Vagina (tissue), 2 donors: ENCODE measurements at regions of chrX and their contacts with region 1.

Region 1: GRCh38 chrX:124328765-124329164 is 3.7 kb upstream of the TEX13D start:
- DNase-seq: no peak
- H3K4me3 ChIP-seq: no peak overlapping the region
- H3K27ac ChIP-seq: no peak overlapping the region
- H3K4me1 ChIP-seq: no peaks in the 10 kb centered on the region
- H3K27me3 ChIP-seq: no peaks in the 10 kb centered on the region
- CTCF ChIP-seq: no peak
- POLR2A ChIP-seq: no peak

Region 2: DNA sequence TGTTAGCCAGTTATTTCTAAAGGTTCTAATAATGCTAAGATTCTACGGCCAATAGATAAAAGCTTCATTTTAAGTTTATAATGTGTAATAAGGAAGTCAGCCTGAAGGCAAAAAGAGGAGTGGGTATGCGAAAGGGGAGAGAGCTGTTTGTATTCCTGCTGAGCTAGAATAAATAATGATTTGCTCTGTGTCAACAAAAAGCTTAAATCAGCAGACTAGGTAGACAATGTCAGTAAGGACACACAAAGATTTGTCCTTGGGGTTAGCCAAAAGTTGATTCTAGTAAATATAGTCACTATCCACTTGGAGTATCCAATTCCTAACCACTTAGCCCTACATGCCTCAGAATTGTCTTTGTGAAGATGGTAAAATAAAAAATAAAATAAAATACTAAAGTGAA is 1235.0 kb before region 1 on chrX:
- intact Hi-C with region 1: loop called (anchors 5 kb)
- DNase-seq: no peak
- H3K4me3 ChIP-seq: no peak overlapping the region
- H3K27ac ChIP-seq: no peak overlapping the region
- H3K4me1 ChIP-seq: no peaks in the 10 kb centered on the region
- H3K27me3 ChIP-seq: no peaks in the 10 kb centered on the region
- CTCF ChIP-seq: no peak
- POLR2A ChIP-seq: no peak

Region 3: DNA sequence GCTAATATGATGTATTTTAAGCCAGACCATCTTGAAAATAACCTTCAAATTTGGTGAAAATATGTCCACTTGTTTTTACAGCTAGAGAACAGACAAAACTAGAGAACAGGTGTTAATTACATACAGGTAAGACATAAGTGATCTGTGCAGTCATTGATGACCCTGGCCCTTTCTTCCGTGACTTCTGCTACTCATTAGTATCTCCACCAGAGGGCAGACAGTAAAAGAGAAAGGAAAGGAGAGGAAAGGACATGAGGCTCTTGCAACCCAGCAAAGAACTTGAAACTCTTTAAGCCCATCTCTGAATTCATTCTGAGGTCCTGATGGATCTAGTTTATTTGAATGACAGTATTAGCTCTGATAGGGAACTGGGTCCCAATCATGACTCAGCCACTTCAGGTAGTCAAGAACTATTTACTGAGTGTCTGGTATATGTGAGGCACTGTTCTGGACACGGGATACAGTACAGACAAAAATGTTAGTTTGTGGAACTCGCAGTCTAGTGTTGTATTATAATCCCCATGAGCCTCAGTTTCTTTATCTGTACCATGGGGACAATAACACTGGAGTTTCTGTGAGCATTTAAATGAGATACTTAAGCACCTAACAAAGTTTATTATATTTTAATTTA is 117.3 kb before region 1 on chrX:
- intact Hi-C with region 1: no loop called
- DNase-seq: no peak
- H3K4me3 ChIP-seq: no peak overlapping the region
- H3K27ac ChIP-seq: no peak overlapping the region
- H3K4me1 ChIP-seq: no peaks in the 10 kb centered on the region
- H3K27me3 ChIP-seq: no peaks in the 10 kb centered on the region
- CTCF ChIP-seq: peak in 1 of 3 experiments; percentile 19
- POLR2A ChIP-seq: no peak

Region 4: GRCh38 chrX:124462931-124463330 is 134.2 kb after region 1 on chrX:
- intact Hi-C with region 1: no loop called
- DNase-seq: no peak
- H3K4me3 ChIP-seq: no peak overlapping the region
- H3K27ac ChIP-seq: no peak overlapping the region
- H3K4me1 ChIP-seq: no peaks in the 10 kb centered on the region
- H3K27me3 ChIP-seq: no peaks in the 10 kb centered on the region
- CTCF ChIP-seq: no peak
- POLR2A ChIP-seq: no peak